Brain microvascular endothelial cell (primary cell): ENCODE measurements at regions of chr16 and their contacts with region 1.

Region 1: DNA sequence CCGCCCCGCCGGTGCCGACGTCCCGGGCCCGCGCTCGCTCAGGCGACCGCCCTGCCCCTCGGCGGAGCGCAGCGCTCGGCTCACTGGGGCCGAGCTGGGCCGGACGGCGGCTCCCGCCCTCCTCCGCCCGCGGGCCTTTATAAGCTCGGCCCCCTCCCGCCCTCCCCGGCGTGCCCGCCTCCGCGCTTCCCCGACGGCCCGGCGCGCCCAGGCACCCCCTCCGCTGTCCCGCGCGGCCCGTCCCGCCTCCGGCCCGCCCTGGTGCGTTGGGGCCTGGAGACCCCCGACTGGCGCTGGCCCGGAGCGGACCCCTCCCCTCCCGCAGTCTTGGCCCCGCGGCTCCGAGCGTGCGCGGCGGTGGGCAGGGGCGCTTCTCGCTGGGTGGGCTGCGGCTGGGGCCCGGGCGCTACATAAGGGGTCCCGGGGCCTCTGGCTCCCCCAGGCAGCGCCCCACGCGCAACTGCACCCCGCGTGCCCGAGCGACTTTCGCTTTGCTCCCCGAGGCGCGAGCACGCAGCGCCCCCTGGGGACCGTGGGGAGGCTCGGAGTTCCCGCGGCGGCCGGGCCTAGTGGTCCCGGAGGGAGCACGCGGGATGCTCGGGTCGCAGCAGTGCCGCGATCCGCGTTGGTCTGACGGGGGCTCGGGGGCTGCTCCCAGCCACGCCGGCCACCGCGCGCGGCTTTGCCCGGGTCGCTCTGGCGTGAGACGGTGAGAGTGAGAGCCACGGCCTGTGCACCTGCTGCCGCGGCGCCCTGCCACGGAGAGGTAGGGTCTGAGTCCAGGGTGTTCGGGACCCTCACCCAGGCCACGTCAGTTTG is at the start of gene PIEZO1:
- DNase-seq: no peak
- H3K4me3 ChIP-seq: peak within 1 kb of the TSS; percentile 65
- H3K27ac ChIP-seq: peak within 1 kb of the TSS; percentile 95
- H3K27me3 ChIP-seq: no peaks in the 10 kb centered on the region
- CTCF ChIP-seq: peak; percentile 71

Region 2: GRCh38 chr16:88686439-88687253 is 98.7 kb before region 1 on chr16 and contains the start of gene SNAI3:
- in situ Hi-C with region 1: loop called (anchors 10 kb)
- DNase-seq: no peak
- H3K4me3 ChIP-seq: peak within 1 kb of the TSS; percentile 47
- H3K27ac ChIP-seq: no peak within 1 kb of the TSS
- H3K27me3 ChIP-seq: peaks cover 2% of the 10 kb centered on the region
- CTCF ChIP-seq: no peak